ENCODE measurements at regions of chr4 and their contacts with region 1.

Region 1: DNA sequence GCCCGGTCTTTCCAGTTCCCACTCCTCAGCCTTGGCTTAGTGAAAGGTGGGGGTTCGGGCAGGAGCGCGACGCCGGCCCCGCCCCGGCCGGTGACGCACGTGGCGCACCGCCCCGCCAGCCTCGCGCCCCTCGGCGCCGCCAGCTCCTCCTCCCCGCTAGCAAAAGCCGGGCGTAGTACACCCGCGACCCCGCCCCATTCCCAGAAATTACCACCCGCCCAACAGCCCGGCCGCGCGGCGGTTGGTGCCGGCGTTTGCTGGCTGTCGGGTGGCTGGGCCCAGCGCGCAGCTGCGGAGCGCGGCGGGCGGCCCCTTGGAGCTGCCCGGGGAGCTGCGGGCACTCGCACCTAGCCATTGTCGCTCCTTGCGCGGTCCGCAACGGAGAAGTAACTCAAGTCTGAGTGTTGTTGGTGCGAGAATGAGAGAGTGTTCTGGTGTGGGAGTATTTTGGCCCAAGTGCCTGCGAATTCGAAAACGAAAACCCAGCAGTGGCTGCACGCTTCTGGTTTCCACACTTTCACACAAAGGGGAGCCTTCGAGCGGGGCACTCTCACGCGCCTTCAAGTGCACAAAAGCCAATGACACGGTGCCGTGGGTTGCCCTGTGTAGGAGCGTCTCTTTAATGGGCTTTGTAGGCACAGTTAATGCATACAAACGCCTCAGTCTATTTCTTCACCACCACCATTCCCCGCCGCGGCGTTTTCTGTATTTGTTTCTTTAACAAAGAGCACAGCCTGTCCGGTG is 1.0 kb upstream of the ELF2 start:
- DNase-seq: peak; percentile 95 to 98
- H3K4me3 ChIP-seq: peak overlapping the region; percentile 86 to 87
- H3K27ac ChIP-seq: peak overlapping the region; percentile 99 to 100
- H3K4me1 ChIP-seq: peaks cover 0 to 27% (median 7%) of the 10 kb centered on the region in 4 donors
- H3K27me3 ChIP-seq: no peaks in the 10 kb centered on the region
- CTCF ChIP-seq: no peak

Region 2: DNA sequence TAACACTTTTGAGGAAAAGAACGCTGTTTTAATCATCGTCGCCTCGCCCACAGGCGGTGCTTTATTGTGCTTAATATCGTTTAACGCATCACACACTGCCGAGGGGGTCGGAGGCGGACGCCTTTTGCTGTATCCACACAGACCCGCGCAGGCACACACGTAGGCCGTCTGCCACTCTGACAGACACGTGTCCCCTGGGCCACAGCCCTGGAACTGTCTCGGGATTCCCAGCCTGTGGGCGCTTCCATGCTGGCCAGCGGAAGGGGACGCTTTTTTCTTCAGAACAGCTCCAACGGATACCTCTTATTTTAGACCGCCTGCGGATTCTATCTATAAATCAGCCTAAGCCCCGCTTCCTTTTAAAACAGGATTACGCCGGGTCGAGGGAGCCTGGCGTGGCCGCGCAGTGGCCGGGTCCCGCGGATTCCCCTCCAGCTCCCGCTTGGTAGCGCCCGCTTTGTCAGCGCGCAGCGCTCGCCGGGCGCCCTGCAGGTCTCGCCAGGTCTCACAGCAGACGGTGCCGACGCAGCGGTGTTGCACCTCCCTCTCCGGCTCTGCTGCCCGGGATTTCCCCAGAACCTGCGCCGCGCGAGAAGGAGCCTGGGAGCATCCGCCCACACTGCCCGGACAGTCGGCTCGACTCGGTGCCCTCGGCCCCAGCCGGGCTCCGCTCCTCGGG is 162.6 kb before region 1 on chr4 and contains the start of gene NOCT:
- intact Hi-C with region 1: loop called (anchors 10 kb)
- DNase-seq: peak; percentile 86 to 92
- H3K4me3 ChIP-seq: peak within 1 kb of the TSS; percentile 64 to 79
- H3K27ac ChIP-seq: peak within 1 kb of the TSS; percentile 84 to 87
- H3K4me1 ChIP-seq: peaks cover 0 to 20% (median 8%) of the 10 kb centered on the region in 4 donors
- H3K27me3 ChIP-seq: no peaks in the 10 kb centered on the region
- CTCF ChIP-seq: peak; percentile 28 to 41

Region 3: GRCh38 chr4:139083956-139084803 is 93.9 kb before region 1 on chr4:
- intact Hi-C with region 1: loop called (anchors 5 kb)
- DNase-seq: peak; percentile 88 to 93
- H3K4me3 ChIP-seq: peak overlapping the region; percentile 87 to 95
- H3K27ac ChIP-seq: peak overlapping the region; percentile 92 to 97
- H3K4me1 ChIP-seq: peaks cover 0 to 38% (median 22%) of the 10 kb centered on the region in 4 donors
- H3K27me3 ChIP-seq: no peaks in the 10 kb centered on the region
- CTCF ChIP-seq: peak in 1 of 2 experiments; percentile 20

Region 4: DNA sequence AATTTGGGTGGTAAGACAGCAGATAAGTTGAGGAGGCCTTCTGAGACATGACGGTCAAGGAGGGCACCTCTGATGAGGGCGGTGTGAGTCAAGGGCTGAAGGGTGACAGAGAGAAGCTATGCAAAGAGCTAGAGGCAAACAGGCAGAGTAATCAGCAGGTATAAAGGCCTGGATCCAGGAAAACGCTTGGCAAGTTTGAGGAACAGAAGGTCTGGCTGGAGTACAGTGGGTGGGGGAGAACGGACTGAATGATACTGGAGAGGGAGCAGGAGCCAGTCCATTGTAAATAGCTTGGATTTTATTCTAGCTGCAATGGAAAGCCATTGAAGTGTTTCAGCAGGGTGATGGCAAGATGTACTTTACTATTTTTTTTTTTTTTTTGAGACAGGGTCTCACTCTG is 315.1 kb after region 1 on chr4:
- intact Hi-C with region 1: no loop called
- DNase-seq: no peak
- H3K4me3 ChIP-seq: no peak overlapping the region
- H3K27ac ChIP-seq: no peak overlapping the region
- H3K4me1 ChIP-seq: peaks cover 0 to 4% (median 0%) of the 10 kb centered on the region in 4 donors
- H3K27me3 ChIP-seq: no peaks in the 10 kb centered on the region
- CTCF ChIP-seq: no peak

Measured in tibial artery (tissue), 4 donors.